Calu3 (cell line): ENCODE measurements at regions of chr17 and their contacts with region 1.

Region 1: DNA sequence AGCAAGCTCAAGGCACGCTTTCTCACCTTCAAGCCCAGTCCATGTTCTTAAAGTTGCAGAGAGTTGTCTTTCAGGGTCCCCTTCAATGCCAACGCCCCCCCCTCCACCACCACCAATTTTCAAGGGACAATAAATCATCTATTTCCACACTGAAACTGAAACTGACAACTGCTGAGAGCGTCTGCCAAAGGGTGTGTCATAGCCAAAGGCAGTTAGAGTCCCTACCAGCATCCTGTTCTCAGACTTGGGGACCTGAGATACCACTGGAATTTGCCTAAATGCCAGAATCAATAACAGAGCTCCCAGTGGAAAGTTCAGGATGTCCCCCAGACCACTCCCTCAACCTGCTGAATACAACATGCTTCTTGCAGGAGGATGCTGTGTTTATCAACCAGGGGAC is 133.2 kb upstream of the SOX9 start:
- DNase-seq: no peak
- H3K4me3 Mint-ChIP-seq: no peak overlapping the region
- H3K27ac Mint-ChIP-seq: no peak overlapping the region
- H3K4me1 Mint-ChIP-seq: peaks cover 9% of the 10 kb centered on the region
- H3K27me3 Mint-ChIP-seq: peaks cover 12% of the 10 kb centered on the region
- CTCF ChIP-seq: no peak

Region 2: GRCh38 chr17:71966055-71966454 is 21.6 kb before region 1 on chr17:
- CTCF ChIA-PET with region 1: interaction called, 10 read pairs
- intact Hi-C with region 1: no loop called
- DNase-seq: no peak
- H3K4me3 Mint-ChIP-seq: no peak overlapping the region
- H3K27ac Mint-ChIP-seq: no peak overlapping the region
- H3K4me1 Mint-ChIP-seq: no peaks in the 10 kb centered on the region
- H3K27me3 Mint-ChIP-seq: no peaks in the 10 kb centered on the region
- CTCF ChIP-seq: no peak